WTC11 (cell line): ENCODE measurements at regions of chr1 and their contacts with region 1.

Region 1: DNA sequence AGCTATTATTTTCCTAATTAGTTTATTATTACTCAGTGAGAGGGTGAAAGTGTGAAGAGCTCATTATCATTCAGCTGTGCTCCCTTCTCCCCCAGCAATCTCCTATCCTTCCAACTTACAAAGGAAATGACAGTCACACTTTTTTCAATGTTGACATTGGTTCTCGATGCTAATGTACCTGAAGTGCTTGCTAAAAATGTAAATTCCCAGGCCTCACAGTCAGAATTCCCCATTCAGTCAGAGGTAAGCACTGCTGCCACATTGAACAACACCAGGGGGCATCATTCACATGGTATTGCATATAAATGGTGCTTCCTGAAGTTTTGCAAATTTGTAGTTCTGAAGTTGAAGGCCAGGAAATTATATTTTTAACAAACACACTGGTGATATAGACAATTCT is 132.7 kb upstream of the FOXD3 start:
- DNase-seq: peak; percentile 52
- ATAC-seq: peak; percentile 92
- H3K4me3 Mint-ChIP-seq: peak overlapping the region; percentile 1
- H3K27ac Mint-ChIP-seq: peak overlapping the region; percentile 1; the same call in 1 of the 2 replicates
- H3K4me1 Mint-ChIP-seq: peaks cover 60% of the 10 kb centered on the region
- H3K27me3 Mint-ChIP-seq: peaks cover 40% of the 10 kb centered on the region
- CTCF ChIP-seq: peak; percentile 33

Region 2: GRCh38 chr1:62882201-62883104 is 307.2 kb before region 1 on chr1:
- CTCF ChIA-PET with region 1: no interaction called
- POLR2A ChIA-PET with region 1: no interaction called
- DNase-seq: no peak
- ATAC-seq: peak; percentile 30; the same call in 1 of the 2 replicates
- H3K4me3 Mint-ChIP-seq: no peak overlapping the region
- H3K27ac Mint-ChIP-seq: no peak overlapping the region
- H3K4me1 Mint-ChIP-seq: peaks cover 26% of the 10 kb centered on the region
- H3K27me3 Mint-ChIP-seq: no peaks in the 10 kb centered on the region
- CTCF ChIP-seq: no peak

Region 3: DNA sequence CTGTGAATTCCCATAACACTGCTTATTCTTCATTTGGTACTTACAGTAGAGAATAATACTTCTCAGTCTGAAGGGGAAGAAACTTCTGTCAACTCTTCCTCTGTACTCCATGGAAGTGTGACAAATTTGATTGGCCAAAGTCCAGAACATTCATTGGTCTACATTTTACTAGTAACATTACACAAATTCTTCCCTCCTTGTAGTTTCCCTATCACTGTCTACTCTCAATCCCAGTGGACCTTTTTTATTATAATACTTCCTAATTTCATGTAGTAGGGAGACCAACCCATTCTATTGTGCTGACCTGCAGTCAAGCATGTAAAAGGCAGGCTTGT is 252.4 kb after region 1 on chr1:
- CTCF ChIA-PET with region 1: interaction called, 11 read pairs
- POLR2A ChIA-PET with region 1: no interaction called
- DNase-seq: no peak
- ATAC-seq: no peak
- H3K4me3 Mint-ChIP-seq: no peak overlapping the region
- H3K27ac Mint-ChIP-seq: no peak overlapping the region
- H3K4me1 Mint-ChIP-seq: peaks cover 10% of the 10 kb centered on the region
- H3K27me3 Mint-ChIP-seq: no peaks in the 10 kb centered on the region
- CTCF ChIP-seq: no peak